ENCODE measurements at regions of chr17 and their contacts with region 1.

Region 1: GRCh38 chr17:35578197-35578928 is at the start of gene PEX12:
- DNase-seq: peak; percentile 82
- H3K4me3 Mint-ChIP-seq: peak within 1 kb of the TSS; percentile 100
- H3K27ac Mint-ChIP-seq: peak within 1 kb of the TSS; percentile 99
- H3K4me1 Mint-ChIP-seq: peaks cover 36% of the 10 kb centered on the region
- H3K27me3 Mint-ChIP-seq: peaks cover 2% of the 10 kb centered on the region
- total RNA-seq, gene PEX12: 5.0 and 5.9 TPM in 2 replicates

Region 2: DNA sequence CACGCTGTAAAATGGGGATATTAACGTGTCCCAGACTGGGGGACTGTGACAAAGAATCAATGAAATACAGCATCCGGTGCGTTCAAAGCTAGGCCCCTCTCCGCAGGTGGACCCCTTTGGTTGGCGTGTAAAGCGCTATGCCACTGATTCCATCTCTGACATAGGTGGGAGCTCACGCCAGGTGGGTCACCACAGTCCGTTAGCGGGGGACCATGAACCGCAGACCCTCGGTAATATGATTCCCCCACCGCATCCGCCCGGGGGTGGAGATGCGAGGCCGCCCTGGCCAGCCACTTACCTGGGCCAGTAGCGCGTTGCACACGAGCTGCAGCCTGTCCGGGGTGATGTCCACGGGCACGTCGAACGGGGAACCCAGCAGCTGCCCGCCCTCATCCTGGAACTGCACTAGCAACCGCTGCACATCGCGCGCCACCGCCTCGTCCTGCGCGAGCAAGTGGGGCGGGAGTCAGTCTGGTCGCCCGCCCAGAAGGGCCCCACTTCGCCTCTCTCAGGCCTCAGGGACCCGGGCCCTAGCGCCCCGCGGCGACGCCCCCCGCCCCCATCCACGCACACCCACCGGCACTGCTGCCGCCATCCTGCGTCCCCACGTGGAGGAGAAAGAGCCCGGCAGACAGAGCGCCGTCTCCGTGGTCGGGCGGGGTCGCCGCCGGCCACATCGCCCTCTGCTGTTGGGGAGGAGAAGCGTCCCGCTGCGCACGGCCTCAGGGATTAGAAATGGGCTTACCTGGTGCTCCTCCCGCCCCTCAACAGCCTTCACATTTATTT is 436.5 kb before region 1 on chr17 and contains the start of gene NLE1:
- intact Hi-C with region 1: loop called (anchors 5 kb)
- DNase-seq: peak; percentile 85
- H3K4me3 Mint-ChIP-seq: peak within 1 kb of the TSS; percentile 86
- H3K27ac Mint-ChIP-seq: peak within 1 kb of the TSS; percentile 80
- H3K4me1 Mint-ChIP-seq: no peaks in the 10 kb centered on the region
- H3K27me3 Mint-ChIP-seq: no peaks in the 10 kb centered on the region
- total RNA-seq, gene NLE1: 51.1 and 54.4 TPM in 2 replicates

Region 3: GRCh38 chr17:35214631-35215273 is 363.6 kb before region 1 on chr17:
- intact Hi-C with region 1: no loop called
- DNase-seq: peak; percentile 12
- H3K4me3 Mint-ChIP-seq: peak overlapping the region; percentile 40
- H3K27ac Mint-ChIP-seq: peak overlapping the region; percentile 92
- H3K4me1 Mint-ChIP-seq: peaks cover 85% of the 10 kb centered on the region
- H3K27me3 Mint-ChIP-seq: no peaks in the 10 kb centered on the region

Region 4: GRCh38 chr17:35605678-35606077 is 27.3 kb after region 1 on chr17:
- intact Hi-C with region 1: no loop called
- DNase-seq: no peak
- H3K4me3 Mint-ChIP-seq: no peak overlapping the region
- H3K27ac Mint-ChIP-seq: no peak overlapping the region
- H3K4me1 Mint-ChIP-seq: no peaks in the 10 kb centered on the region
- H3K27me3 Mint-ChIP-seq: no peaks in the 10 kb centered on the region

Region 5: GRCh38 chr17:36545465-36546417 is 967.4 kb after region 1 on chr17:
- intact Hi-C with region 1: no loop called
- DNase-seq: peak; percentile 95
- H3K4me3 Mint-ChIP-seq: peak overlapping the region; percentile 87
- H3K27ac Mint-ChIP-seq: peak overlapping the region; percentile 92
- H3K4me1 Mint-ChIP-seq: peaks cover 36% of the 10 kb centered on the region
- H3K27me3 Mint-ChIP-seq: no peaks in the 10 kb centered on the region